ENCODE measurements at regions of chr16 and their contacts with region 1.

Region 1: GRCh38 chr16:57795431-57795878 is 6.8 kb downstream of the KIFC3 start:
- DNase-seq: peak; percentile 66 to 76
- H3K4me3 ChIP-seq: no peak overlapping the region
- H3K27ac ChIP-seq: peak overlapping the region; percentile 96
- H3K4me1 ChIP-seq: peaks cover 52% of the 10 kb centered on the region
- H3K27me3 ChIP-seq: no peaks in the 10 kb centered on the region
- CTCF ChIP-seq: peak; percentile 59

Region 2: DNA sequence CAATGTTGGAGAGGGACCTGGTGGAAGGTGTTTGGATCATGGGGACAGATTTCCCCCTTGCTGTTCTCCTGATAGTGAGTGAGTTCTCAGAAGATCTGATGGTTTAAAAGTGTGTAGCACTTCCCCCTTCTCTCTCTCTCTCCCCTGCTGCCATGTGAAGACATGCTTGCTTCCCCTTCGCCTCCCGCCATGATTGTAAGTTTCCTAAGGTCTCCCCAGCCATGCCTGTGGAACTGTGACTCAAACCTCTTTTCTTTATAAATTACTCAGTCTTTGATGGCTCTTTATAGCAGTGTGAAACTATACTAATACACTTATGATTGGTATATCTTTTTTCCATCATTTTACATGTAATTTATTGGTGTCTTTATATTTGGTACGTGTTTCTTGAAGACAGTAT is 239.6 kb before region 1 on chr16:
- CTCF ChIA-PET with region 1: no interaction called
- POLR2A ChIA-PET with region 1: no interaction called
- intact Hi-C with region 1: no loop called
- DNase-seq: no peak
- H3K4me3 ChIP-seq: no peak overlapping the region
- H3K27ac ChIP-seq: no peak overlapping the region
- H3K4me1 ChIP-seq: no peaks in the 10 kb centered on the region
- H3K27me3 ChIP-seq: peaks cover 7% of the 10 kb centered on the region; the same call in 1 of the 2 replicates
- CTCF ChIP-seq: no peak

Region 3: DNA sequence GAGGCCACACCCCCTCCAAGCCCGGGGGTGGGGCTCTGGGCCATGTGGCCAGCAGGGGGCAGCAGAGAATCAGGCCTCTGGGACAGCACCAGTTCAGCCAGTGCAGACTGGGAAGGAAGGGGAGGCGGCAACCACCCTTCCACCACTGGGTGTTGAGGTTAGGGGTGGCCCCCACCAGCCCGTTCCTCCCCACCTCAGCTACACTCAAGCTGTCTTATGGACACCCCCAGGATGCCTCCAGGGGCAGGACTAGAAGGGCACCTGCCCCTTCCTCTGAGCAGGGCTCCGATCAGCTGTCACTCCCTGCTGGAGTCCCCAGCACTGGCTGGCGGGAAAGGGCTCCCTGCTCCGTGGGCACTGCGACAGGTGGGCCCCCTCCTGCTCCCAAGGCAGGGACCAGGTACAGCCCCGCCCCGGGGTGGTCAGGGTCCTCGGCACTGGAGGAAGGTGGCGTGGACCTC is 38.1 kb before region 1 on chr16:
- CTCF ChIA-PET with region 1: no interaction called
- POLR2A ChIA-PET with region 1: no interaction called
- intact Hi-C with region 1: loop called (anchors 1 kb)
- DNase-seq: peak; percentile 59 to 91
- H3K4me3 ChIP-seq: no peak overlapping the region
- H3K27ac ChIP-seq: no peak overlapping the region
- H3K4me1 ChIP-seq: peaks cover 21% of the 10 kb centered on the region
- H3K27me3 ChIP-seq: no peaks in the 10 kb centered on the region
- CTCF ChIP-seq: peak; percentile 96

Region 4: DNA sequence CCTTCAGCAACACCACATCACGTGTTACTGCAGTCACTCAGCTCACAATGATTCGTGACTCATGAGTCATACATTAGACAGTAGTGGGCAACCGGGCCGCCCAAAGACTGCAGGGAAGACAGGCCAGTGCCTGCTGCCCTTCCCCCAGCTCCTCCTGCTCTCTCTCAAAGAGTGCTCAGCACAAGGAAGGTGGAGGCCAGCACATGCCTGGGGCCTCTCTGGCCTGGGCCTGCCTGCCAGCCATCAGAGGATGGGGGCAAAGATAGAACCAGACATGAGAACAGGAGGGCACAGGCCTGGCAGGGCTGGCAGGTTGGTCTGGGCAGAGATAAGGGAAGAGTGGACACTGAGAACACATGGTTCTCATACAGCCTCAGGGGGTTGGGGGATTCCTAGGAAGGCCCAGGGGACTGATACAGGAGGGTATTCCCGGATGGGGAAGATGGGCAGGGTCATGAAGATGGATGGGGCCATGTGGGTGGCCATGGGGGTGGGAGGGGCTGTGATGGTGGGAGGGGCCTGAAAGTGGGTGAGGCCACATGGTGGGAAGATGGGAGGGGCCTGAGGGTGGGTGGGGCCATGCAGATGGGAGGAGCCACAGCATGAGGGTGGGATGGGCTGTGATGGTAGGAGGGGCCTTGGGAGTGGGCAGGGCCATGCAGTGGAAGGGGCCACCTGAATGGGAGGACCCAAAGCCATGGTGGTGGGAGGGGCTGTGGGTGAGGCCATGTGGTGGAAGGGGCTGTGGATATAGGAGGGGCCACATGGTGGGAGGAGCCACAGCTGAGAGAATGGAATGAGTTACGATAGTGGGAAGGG is 30.9 kb before region 1 on chr16:
- CTCF ChIA-PET with region 1: interaction called, 3 read pairs
- POLR2A ChIA-PET with region 1: interaction called, 19 read pairs
- intact Hi-C with region 1: loop called (anchors 1 kb)
- DNase-seq: peak; percentile 69 to 78
- H3K4me3 ChIP-seq: no peak overlapping the region
- H3K27ac ChIP-seq: peak overlapping the region; percentile 83
- H3K4me1 ChIP-seq: peaks cover 25% of the 10 kb centered on the region
- H3K27me3 ChIP-seq: no peaks in the 10 kb centered on the region
- CTCF ChIP-seq: no peak

Region 5: GRCh38 chr16:57781741-57782606 is 13.5 kb before region 1 on chr16:
- CTCF ChIA-PET with region 1: no interaction called
- POLR2A ChIA-PET with region 1: no interaction called
- intact Hi-C with region 1: no loop called
- DNase-seq: no peak
- H3K4me3 ChIP-seq: no peak overlapping the region
- H3K27ac ChIP-seq: peak overlapping the region; percentile 43
- H3K4me1 ChIP-seq: peaks cover 31% of the 10 kb centered on the region
- H3K27me3 ChIP-seq: no peaks in the 10 kb centered on the region
- CTCF ChIP-seq: no peak

Region 6: DNA sequence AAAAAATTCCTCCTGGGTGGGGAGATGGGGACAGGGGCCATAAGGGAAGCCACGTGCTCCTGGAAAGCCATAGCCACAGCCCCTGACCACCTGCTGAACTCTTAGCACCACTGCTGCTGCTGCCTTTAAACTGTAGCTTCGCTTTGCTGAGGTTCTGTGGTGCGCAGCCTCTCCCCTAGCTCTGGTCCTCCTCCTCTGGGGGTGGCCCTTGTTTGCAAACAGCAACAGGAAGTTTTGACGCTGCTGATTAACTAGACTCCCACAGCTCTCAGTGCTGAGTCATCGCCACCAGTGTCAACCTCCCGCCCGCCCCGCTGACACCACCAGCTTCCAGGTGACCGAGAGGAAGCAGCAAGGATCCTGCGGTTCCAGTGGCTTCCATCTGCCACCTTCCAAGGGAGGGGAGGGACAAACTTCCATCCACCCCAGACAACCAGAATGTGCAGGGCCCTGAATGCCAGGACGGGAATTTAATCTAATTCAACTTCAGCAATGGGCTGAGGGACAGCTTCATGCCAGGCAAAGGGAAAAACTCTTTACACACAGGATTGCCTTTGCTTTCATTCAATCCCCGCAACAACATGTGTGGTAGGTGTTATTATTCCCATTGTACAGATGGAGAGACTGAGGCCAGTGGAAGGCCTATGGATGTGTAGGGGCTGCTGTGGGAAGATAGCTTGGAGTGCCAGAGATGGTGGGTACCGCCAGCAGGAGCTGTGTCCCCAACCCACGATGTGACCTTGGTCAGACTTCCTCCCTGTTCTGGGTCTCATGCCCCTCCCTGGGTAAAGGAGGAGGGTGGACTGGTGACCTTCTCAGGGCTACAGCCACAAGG is 15.0 kb after region 1 on chr16:
- CTCF ChIA-PET with region 1: interaction called, 7 read pairs
- POLR2A ChIA-PET with region 1: interaction called, 3 read pairs
- intact Hi-C with region 1: loop called (anchors 1 kb)
- DNase-seq: peak; percentile 91 to 97
- H3K4me3 ChIP-seq: peak overlapping the region; percentile 23; the same call in 1 of the 2 replicates
- H3K27ac ChIP-seq: peak overlapping the region; percentile 88
- H3K4me1 ChIP-seq: peaks cover 81% of the 10 kb centered on the region
- H3K27me3 ChIP-seq: no peaks in the 10 kb centered on the region
- CTCF ChIP-seq: no peak

Region 7: GRCh38 chr16:57824880-57825279 is 29.4 kb after region 1 on chr16:
- CTCF ChIA-PET with region 1: interaction called, 4 read pairs
- POLR2A ChIA-PET with region 1: no interaction called
- intact Hi-C with region 1: loop called (anchors 1 kb)
- DNase-seq: peak; percentile 91 to 99
- H3K4me3 ChIP-seq: no peak overlapping the region
- H3K27ac ChIP-seq: peak overlapping the region; percentile 87
- H3K4me1 ChIP-seq: peaks cover 68% of the 10 kb centered on the region
- H3K27me3 ChIP-seq: no peaks in the 10 kb centered on the region
- CTCF ChIP-seq: no peak

Region 8: GRCh38 chr16:57863434-57864160 is 68.1 kb after region 1 on chr16:
- CTCF ChIA-PET with region 1: interaction called, 6 read pairs
- POLR2A ChIA-PET with region 1: no interaction called
- intact Hi-C with region 1: loop called (anchors 1 kb)
- DNase-seq: peak; percentile 64 to 78
- H3K4me3 ChIP-seq: no peak overlapping the region
- H3K27ac ChIP-seq: peak overlapping the region; percentile 41
- H3K4me1 ChIP-seq: peaks cover 40% of the 10 kb centered on the region
- H3K27me3 ChIP-seq: no peaks in the 10 kb centered on the region
- CTCF ChIP-seq: peak; percentile 63

Measured in PC-9 (cell line).